ENCODE measurements at regions of chr11 and their contacts with region 1.

Region 1: DNA sequence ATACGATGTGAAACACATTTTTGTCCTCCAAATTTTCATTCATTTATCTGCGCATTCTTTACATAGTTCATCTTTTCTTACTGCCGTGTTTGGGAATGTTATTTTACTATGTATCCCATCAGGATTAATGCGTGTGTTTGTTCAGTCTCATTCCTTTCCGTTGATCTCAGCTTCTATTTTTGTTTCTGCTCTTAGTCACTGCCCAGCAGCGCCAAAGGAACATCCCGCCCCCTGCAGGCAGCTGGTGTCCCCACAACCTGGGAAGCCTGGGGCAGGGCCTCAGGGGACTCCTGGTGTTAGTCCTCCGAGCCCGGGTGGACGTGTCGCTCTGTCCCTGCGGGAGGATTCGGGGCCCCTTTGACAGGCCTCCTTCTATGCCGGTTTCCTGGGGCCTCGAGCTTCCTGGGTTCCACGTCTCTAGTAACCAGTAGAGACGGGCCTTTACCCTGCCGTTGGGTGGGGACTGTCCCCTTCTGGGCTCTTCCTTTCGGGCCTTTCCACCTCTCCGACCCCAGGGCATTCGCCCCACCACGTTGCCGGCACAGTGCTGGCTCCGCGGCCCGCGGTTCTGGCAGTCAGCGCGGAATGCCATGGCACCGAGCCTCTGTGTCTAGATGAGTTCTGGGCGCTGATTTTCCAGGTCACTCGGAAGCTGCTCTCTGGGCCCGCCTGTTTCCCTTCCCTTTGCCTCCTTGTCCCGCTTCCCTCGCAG is 39.8 kb downstream of the WEE1 start:
- DNase-seq: peak; percentile 94
- H3K4me3 Mint-ChIP-seq: peak overlapping the region; percentile 77
- H3K27ac Mint-ChIP-seq: peak overlapping the region; percentile 97
- H3K4me1 Mint-ChIP-seq: peaks cover 35% of the 10 kb centered on the region
- H3K27me3 Mint-ChIP-seq: no peaks in the 10 kb centered on the region
- CTCF ChIP-seq: peak; percentile 92

Region 2: GRCh38 chr11:9534791-9535781 is 78.2 kb before region 1 on chr11:
- CTCF ChIA-PET with region 1: interaction called, 10 read pairs
- POLR2A ChIA-PET with region 1: interaction called, 5 read pairs
- intact Hi-C with region 1: loop called (anchors 1 kb)
- DNase-seq: peak; percentile 94
- H3K4me3 Mint-ChIP-seq: no peak overlapping the region
- H3K27ac Mint-ChIP-seq: peak overlapping the region; percentile 49
- H3K4me1 Mint-ChIP-seq: no peaks in the 10 kb centered on the region
- H3K27me3 Mint-ChIP-seq: no peaks in the 10 kb centered on the region
- CTCF ChIP-seq: peak; percentile 91

Region 3: GRCh38 chr11:9573052-9573774 is 40.1 kb before region 1 on chr11 and contains the start of gene WEE1:
- CTCF ChIA-PET with region 1: interaction called, 28 read pairs
- POLR2A ChIA-PET with region 1: interaction called, 125 read pairs
- intact Hi-C with region 1: loop called (anchors 1 kb)
- DNase-seq: peak; percentile 98
- H3K4me3 Mint-ChIP-seq: peak within 1 kb of the TSS; percentile 79
- H3K27ac Mint-ChIP-seq: peak within 1 kb of the TSS; percentile 99
- H3K4me1 Mint-ChIP-seq: peaks cover 20% of the 10 kb centered on the region
- H3K27me3 Mint-ChIP-seq: no peaks in the 10 kb centered on the region
- CTCF ChIP-seq: no peak
- total RNA-seq, gene WEE1: 28.7 and 34.5 TPM in 2 replicates

Region 4: GRCh38 chr11:9663699-9664275 is 50.5 kb after region 1 on chr11 and contains the start of gene SWAP70:
- CTCF ChIA-PET with region 1: interaction called, 6 read pairs
- POLR2A ChIA-PET with region 1: interaction called, 13 read pairs
- intact Hi-C with region 1: no loop called
- DNase-seq: peak; percentile 75
- H3K4me3 Mint-ChIP-seq: peak within 1 kb of the TSS; percentile 91
- H3K27ac Mint-ChIP-seq: peak within 1 kb of the TSS; percentile 88
- H3K4me1 Mint-ChIP-seq: peaks cover 6% of the 10 kb centered on the region
- H3K27me3 Mint-ChIP-seq: no peaks in the 10 kb centered on the region
- CTCF ChIP-seq: peak; percentile 33
- total RNA-seq, gene SWAP70: 13.0 and 24.2 TPM in 2 replicates

Region 5: GRCh38 chr11:9972989-9973388 is 359.7 kb after region 1 on chr11:
- CTCF ChIA-PET with region 1: interaction called, 3 read pairs
- POLR2A ChIA-PET with region 1: no interaction called
- intact Hi-C with region 1: loop called (anchors 10 kb)
- DNase-seq: peak; percentile 60
- H3K4me3 Mint-ChIP-seq: no peak overlapping the region
- H3K27ac Mint-ChIP-seq: peak overlapping the region; percentile 8
- H3K4me1 Mint-ChIP-seq: peaks cover 6% of the 10 kb centered on the region
- H3K27me3 Mint-ChIP-seq: no peaks in the 10 kb centered on the region
- CTCF ChIP-seq: peak; percentile 76

Region 6: GRCh38 chr11:11555208-11555607 is 1941.9 kb after region 1 on chr11:
- CTCF ChIA-PET with region 1: no interaction called
- POLR2A ChIA-PET with region 1: no interaction called
- intact Hi-C with region 1: no loop called
- DNase-seq: no peak
- H3K4me3 Mint-ChIP-seq: no peak overlapping the region
- H3K27ac Mint-ChIP-seq: no peak overlapping the region
- H3K4me1 Mint-ChIP-seq: peaks cover 8% of the 10 kb centered on the region
- H3K27me3 Mint-ChIP-seq: no peaks in the 10 kb centered on the region
- CTCF ChIP-seq: no peak

Measured in MCF 10A (cell line).